GM10248 (cell line): ENCODE measurements at regions of chr5 and their contacts with region 1.

Region 1: DNA sequence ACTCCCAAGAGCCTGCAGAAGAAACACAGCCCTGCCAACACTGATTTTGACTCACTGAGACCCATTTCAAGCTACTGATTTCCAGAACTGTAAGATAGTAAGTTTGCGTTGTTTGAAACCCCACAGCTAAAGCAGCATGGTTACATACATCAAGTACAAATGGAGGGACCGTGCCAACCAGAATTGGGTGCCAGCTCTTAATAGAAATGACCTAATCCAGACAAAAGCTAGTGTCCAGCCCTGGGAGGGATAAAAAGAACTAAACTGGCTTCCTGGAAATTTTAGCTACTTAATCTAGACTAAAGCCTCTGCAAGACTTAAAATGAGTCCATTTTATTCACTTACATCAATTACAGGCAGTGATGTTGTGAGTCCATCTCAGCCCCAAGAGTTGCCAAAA is 122.6 kb downstream of the ADAMTS12 start:
- DNase-seq: no peak
- CTCF ChIP-seq: no peak

Region 2: DNA sequence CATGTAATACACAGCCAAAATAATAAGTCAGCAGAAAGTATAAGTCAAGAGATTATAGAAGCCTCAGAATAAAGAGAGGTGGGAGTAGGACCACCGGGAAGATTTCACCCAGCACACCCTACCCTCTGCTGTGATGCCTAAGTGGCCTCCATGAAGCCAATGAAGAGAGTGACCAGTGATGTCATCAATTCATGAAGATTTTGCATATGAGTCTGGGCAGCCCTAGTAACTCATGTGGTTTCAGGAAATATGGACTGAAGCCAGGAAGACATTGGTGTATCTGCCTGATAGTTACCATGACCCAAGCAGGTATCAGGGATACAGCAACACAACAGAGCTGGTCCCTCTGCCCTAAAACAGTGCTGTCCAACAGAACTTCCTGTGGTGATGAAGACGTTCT is 12.7 kb before region 1 on chr5:
- CTCF ChIA-PET with region 1: interaction called, 10 read pairs
- POLR2A ChIA-PET with region 1: no interaction called
- DNase-seq: no peak
- CTCF ChIP-seq: no peak

Region 3: DNA sequence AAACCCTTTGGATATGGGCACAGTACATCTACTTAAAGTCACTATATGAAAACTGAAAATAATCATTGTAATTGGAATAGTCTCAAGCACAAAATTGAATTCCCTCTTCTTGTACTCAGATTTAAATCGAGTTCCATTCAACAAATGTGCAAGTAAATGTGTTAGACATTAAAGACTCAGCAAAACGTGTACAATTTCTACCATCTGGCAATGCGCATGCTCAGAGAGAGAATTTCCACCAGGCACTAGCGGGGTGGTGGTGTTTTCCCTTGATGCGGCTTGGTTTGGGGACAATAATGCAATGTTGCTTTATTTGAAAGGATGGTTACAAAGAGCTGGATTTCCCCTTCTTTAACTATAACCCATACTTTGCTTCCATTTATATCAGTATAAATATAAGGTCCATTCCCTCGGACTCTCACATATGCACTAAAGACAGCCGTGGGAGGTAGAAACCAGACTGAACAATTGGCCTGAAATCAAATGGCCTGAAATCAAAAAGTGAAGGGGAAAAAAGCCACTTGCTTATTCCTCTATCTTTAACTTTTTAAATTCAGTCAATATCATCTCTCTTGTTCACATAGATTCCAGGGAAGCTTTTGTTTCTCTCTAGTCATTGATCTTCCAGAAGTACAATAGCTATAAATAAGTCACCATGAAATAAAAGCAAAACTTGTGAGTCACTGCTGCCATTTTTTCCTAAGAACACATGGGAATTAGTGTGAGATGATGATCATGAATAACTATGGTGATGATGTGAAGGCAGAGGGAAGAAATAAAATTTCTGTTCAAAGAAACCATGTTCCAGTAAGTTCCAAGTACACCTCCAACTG is 63.4 kb after region 1 on chr5:
- CTCF ChIA-PET with region 1: no interaction called
- POLR2A ChIA-PET with region 1: no interaction called
- DNase-seq: no peak
- CTCF ChIP-seq: no peak